ENCODE measurements at regions of chr21 and their contacts with region 1.

Region 1: DNA sequence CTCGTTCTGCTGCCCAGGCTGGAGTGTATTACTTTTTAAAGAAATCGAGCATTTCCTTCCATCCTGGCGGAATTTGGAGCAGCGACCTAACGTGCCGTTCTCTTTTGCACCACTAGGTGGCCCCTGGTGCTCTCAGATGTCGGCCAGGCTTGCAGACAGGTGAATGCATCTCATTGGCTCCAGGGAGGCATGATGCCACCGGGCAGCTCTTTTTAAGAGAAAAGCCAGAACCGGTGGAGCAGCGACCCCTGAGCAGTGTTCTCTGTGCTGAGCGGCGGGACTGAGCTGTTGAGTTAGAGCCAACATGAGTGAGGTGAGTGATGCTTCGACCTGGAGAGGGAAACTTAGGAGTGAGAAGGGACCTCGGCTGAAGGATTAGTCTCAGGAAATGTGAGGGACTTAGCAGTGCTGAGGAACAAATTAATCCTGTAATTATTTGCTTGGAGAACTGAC is at the start of gene PCP4:
- DNase-seq: no peak
- H3K4me3 ChIP-seq: peak within 1 kb of the TSS; percentile 45 to 66 (median 50)
- H3K27ac ChIP-seq: peak within 1 kb of the TSS; percentile 59 to 81 (median 68)
- H3K4me1 ChIP-seq: peaks cover 0 to 22% (median 19%) of the 10 kb centered on the region in 4 donors
- H3K27me3 ChIP-seq: no peaks in the 10 kb centered on the region
- CTCF ChIP-seq: peak; percentile 81 to 90 (median 89)
- EP300 ChIP-seq: no peak
- POLR2A ChIP-seq: peak; percentile 20
- total RNA-seq, gene PCP4: 82.0 to 172 (median 125) TPM

Region 2: GRCh38 chr21:39788383-39788782 is 78.8 kb before region 1 on chr21:
- intact Hi-C with region 1: loop called (anchors 5 kb)
- DNase-seq: peak; percentile 94
- H3K4me3 ChIP-seq: no peak overlapping the region
- H3K27ac ChIP-seq: peak overlapping the region; percentile 49 to 72 (median 58)
- H3K4me1 ChIP-seq: peaks cover 0 to 21% (median 13%) of the 10 kb centered on the region in 4 donors
- H3K27me3 ChIP-seq: no peaks in the 10 kb centered on the region
- CTCF ChIP-seq: peak; percentile 87 to 92 (median 90)
- EP300 ChIP-seq: peak; percentile 18
- POLR2A ChIP-seq: no peak

Region 3: GRCh38 chr21:39924577-39925308 is 57.5 kb after region 1 on chr21:
- intact Hi-C with region 1: no loop called
- DNase-seq: no peak
- H3K4me3 ChIP-seq: no peak overlapping the region
- H3K27ac ChIP-seq: no peak overlapping the region
- H3K4me1 ChIP-seq: peaks cover 0 to 4% (median 0%) of the 10 kb centered on the region in 4 donors
- H3K27me3 ChIP-seq: no peaks in the 10 kb centered on the region
- CTCF ChIP-seq: no peak
- EP300 ChIP-seq: no peak
- POLR2A ChIP-seq: no peak